ENCODE measurements at regions of chr1 and their contacts with region 1.

Region 1: GRCh38 chr1:235093696-235094592 is 34.7 kb downstream of the TOMM20 start:
- DNase-seq: peak; percentile 79 to 88 (median 80)
- ATAC-seq: peak; percentile 79
- H3K4me3 ChIP-seq: no peak overlapping the region
- H3K27ac ChIP-seq: no peak overlapping the region
- H3K4me1 ChIP-seq: peaks cover 13% of the 10 kb centered on the region
- H3K27me3 ChIP-seq: no peaks in the 10 kb centered on the region
- CTCF ChIP-seq: peak; percentile 86 to 97 (median 89)
- POLR2A ChIP-seq: no peak

Region 2: GRCh38 chr1:234490793-234491479 is 603.0 kb before region 1 on chr1:
- intact Hi-C with region 1: loop called (anchors 5 kb)
- DNase-seq: no peak
- ATAC-seq: no peak
- H3K4me3 ChIP-seq: no peak overlapping the region
- H3K27ac ChIP-seq: no peak overlapping the region
- H3K4me1 ChIP-seq: no peaks in the 10 kb centered on the region
- H3K27me3 ChIP-seq: no peaks in the 10 kb centered on the region
- CTCF ChIP-seq: no peak
- POLR2A ChIP-seq: no peak